K562 (cell line): ENCODE measurements at regions of chr1 and their contacts with region 1.

Region 1: GRCh38 chr1:156728597-156729462 is at the start of gene ISG20L2:
- DNase-seq: peak; percentile 92 to 99 (median 92)
- ATAC-seq: peak; percentile 88
- H3K4me3 ChIP-seq: peak within 1 kb of the TSS; percentile 76
- H3K27ac ChIP-seq: peak within 1 kb of the TSS; percentile 82
- H3K4me1 ChIP-seq: peaks cover 13 to 17% of the 10 kb centered on the region in 2 experiments; a peak in 4 of 5 replicates
- H3K27me3 ChIP-seq: no peaks in the 10 kb centered on the region; a peak in 1 of 5 replicates
- CTCF ChIP-seq: 0 out of 6 replicates have a peak, but pooled peaks of 1 of the 3 experiments have one; percentile 9
- EP300 ChIP-seq: peak; percentile 38; the same call in 1 of the 2 replicates
- POLR2A ChIP-seq: peak; percentile 59
- RAD21 ChIP-seq: no peak
- polyA plus RNA-seq, gene ISG20L2: 21.3 to 50.3 TPM

Region 2: GRCh38 chr1:156625436-156626078 is 103.3 kb before region 1 on chr1:
- CTCF ChIA-PET with region 1: interaction called, 17 read pairs
- POLR2A ChIA-PET with region 1: interaction called, 4 read pairs
- in situ Hi-C with region 1: no loop called
- intact Hi-C with region 1: loop called (anchors 5 kb)
- DNase-seq: peak; percentile 51 to 82 (median 73)
- ATAC-seq: peak; percentile 58
- H3K4me3 ChIP-seq: peak overlapping the region; percentile 52
- H3K27ac ChIP-seq: peak overlapping the region; percentile 69
- H3K4me1 ChIP-seq: peaks cover 0 to 25% of the 10 kb centered on the region in 2 experiments; a peak in 4 of 5 replicates
- H3K27me3 ChIP-seq: no peaks in the 10 kb centered on the region; a peak in 2 of 5 replicates
- CTCF ChIP-seq: peak; percentile 77 to 89 (median 82)
- EP300 ChIP-seq: no peak
- POLR2A ChIP-seq: no peak
- RAD21 ChIP-seq: peak; percentile 59 to 76

Region 3: GRCh38 chr1:156689035-156689952 is 39.5 kb before region 1 on chr1:
- CTCF ChIA-PET with region 1: interaction called, 143 read pairs
- POLR2A ChIA-PET with region 1: interaction called, 60 read pairs
- in situ Hi-C with region 1: no loop called
- intact Hi-C with region 1: loop called (anchors 1 kb)
- DNase-seq: peak; percentile 87 to 90 (median 88)
- ATAC-seq: peak; percentile 81
- H3K4me3 ChIP-seq: peak overlapping the region; percentile 32
- H3K27ac ChIP-seq: peak overlapping the region; percentile 21; the same call in 2 of the 3 replicates
- H3K4me1 ChIP-seq: peaks cover 45 to 54% of the 10 kb centered on the region in 2 experiments
- H3K27me3 ChIP-seq: 0 out of 5 replicates have a peak, but pooled peaks cover 0 to 2% of the 10 kb centered on the region in 2 experiments
- CTCF ChIP-seq: peak; percentile 92 to 97 (median 97)
- EP300 ChIP-seq: 0 out of 2 replicates have a peak, but pooled peaks have one; percentile 12
- POLR2A ChIP-seq: no peak
- RAD21 ChIP-seq: peak; percentile 94 to 98

Region 4: GRCh38 chr1:156717275-156717805 is 11.5 kb before region 1 on chr1:
- CTCF ChIA-PET with region 1: no interaction called
- POLR2A ChIA-PET with region 1: interaction called, 12 read pairs
- in situ Hi-C with region 1: no loop called
- intact Hi-C with region 1: no loop called
- DNase-seq: no peak
- ATAC-seq: no peak
- H3K4me3 ChIP-seq: no peak overlapping the region
- H3K27ac ChIP-seq: no peak overlapping the region
- H3K4me1 ChIP-seq: no peaks in the 10 kb centered on the region; a peak in 1 of 5 replicates
- H3K27me3 ChIP-seq: no peaks in the 10 kb centered on the region
- CTCF ChIP-seq: no peak
- EP300 ChIP-seq: no peak
- POLR2A ChIP-seq: no peak
- RAD21 ChIP-seq: no peak

Region 5: DNA sequence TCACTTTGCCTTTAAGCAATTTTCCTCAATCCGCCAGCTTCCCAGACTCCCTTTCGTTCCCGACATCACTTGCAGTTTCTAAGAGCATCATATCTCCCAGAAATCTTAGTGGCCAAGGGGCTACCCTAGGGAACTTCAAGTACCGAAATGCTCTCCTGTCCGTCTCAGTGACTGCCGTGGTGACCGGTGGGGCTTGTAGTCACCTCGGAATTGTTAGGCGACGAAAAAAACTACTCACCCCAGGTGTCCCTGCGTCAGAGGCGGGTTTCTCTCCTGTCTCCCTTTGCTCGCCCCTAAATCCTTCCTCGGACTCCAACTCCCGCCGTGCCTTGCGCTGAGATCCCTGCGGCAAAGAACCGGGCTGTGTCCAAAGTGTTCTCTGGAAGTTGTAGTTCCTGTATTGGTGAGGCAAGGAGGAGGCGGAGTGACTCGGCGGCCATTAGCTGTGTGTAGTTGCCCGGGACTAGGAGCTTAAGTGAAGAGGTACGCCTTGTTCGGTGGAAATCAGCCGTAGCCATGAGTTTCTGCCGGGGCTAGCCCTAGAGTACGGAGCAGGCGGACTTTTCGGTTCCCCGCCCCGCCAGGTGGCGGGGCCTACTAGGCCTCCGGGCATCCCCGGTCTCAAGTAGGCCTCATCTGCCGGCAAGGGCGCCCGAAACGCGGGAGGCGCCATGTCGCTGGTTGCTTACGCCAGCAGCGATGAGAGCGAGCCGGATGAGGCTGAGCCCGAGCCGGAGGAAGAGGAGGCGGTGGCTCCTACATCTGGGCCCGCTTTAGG is 38.5 kb after region 1 on chr1 and contains the start of gene PRCC:
- CTCF ChIA-PET with region 1: interaction called, 3 read pairs
- POLR2A ChIA-PET with region 1: interaction called, 6 read pairs
- in situ Hi-C with region 1: loop called (anchors 5 kb)
- intact Hi-C with region 1: loop called (anchors 2 kb)
- DNase-seq: peak; percentile 87 to 99 (median 89)
- ATAC-seq: peak; percentile 94
- H3K4me3 ChIP-seq: peak within 1 kb of the TSS; percentile 88
- H3K27ac ChIP-seq: peak within 1 kb of the TSS; percentile 84
- H3K4me1 ChIP-seq: peaks cover 17 to 22% of the 10 kb centered on the region in 2 experiments; a peak in 3 of 5 replicates
- H3K27me3 ChIP-seq: no peaks in the 10 kb centered on the region
- CTCF ChIP-seq: peak in 1 of 3 experiments; percentile 19; a peak in 2 of 6 replicates
- EP300 ChIP-seq: 0 out of 2 replicates have a peak, but pooled peaks have one; percentile 2
- POLR2A ChIP-seq: peak; percentile 79
- RAD21 ChIP-seq: 0 out of 4 replicates have a peak, but pooled peaks of 1 of the 2 experiments have one; percentile 3
- polyA plus RNA-seq, gene PRCC: 23.9 to 25.5 TPM

Region 6: GRCh38 chr1:156845055-156845952 is 116.5 kb after region 1 on chr1:
- CTCF ChIA-PET with region 1: no interaction called
- POLR2A ChIA-PET with region 1: no interaction called
- in situ Hi-C with region 1: no loop called
- intact Hi-C with region 1: no loop called
- DNase-seq: peak; percentile 34 to 89 (median 76)
- ATAC-seq: peak; percentile 59
- H3K4me3 ChIP-seq: no peak overlapping the region
- H3K27ac ChIP-seq: no peak overlapping the region
- H3K4me1 ChIP-seq: peaks cover 9 to 26% of the 10 kb centered on the region in 2 experiments; a peak in 4 of 5 replicates
- H3K27me3 ChIP-seq: 0 out of 5 replicates have a peak, but pooled peaks cover 0 to 13% of the 10 kb centered on the region in 2 experiments
- CTCF ChIP-seq: no peak
- EP300 ChIP-seq: no peak
- POLR2A ChIP-seq: no peak
- RAD21 ChIP-seq: no peak

Region 7: DNA sequence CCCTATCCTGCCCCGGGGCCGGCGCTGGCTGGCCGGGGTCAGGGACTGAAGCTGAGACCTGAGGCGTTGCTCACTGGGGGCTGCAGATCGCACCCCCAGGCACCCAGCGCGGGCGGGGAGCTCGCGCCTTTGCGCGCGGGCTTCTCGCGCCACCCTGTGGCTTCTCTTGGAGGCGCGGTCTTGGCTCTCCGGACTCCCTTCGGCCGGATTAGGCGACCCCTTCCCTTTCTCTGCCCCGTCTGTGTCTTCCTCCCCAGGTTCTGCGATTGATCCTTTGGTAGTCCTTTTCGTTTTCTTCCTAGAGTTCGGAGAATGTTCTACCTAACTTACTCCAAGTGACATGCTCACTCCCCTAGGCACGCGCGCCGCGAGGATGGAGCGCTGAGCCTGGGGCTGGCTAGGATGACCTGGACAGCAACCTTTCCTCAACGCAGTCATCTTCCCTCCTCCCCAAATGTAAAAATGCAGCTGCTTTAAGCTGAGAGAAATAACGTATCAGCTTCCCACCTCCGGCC is 131.3 kb after region 1 on chr1:
- CTCF ChIA-PET with region 1: interaction called, 31 read pairs
- POLR2A ChIA-PET with region 1: interaction called, 12 read pairs
- in situ Hi-C with region 1: loop called (anchors 5 kb)
- intact Hi-C with region 1: loop called (anchors 1 kb)
- DNase-seq: peak; percentile 80 to 86 (median 80)
- ATAC-seq: peak; percentile 78
- H3K4me3 ChIP-seq: peak overlapping the region; percentile 34
- H3K27ac ChIP-seq: no peak overlapping the region; the same call in 2 of the 3 replicates
- H3K4me1 ChIP-seq: peaks cover 75 to 81% of the 10 kb centered on the region in 2 experiments
- H3K27me3 ChIP-seq: no peaks in the 10 kb centered on the region
- CTCF ChIP-seq: peak; percentile 83 to 90 (median 85)
- EP300 ChIP-seq: no peak
- POLR2A ChIP-seq: no peak
- RAD21 ChIP-seq: peak; percentile 89 to 94

Region 8: GRCh38 chr1:156920233-156921052 is 191.6 kb after region 1 on chr1 and contains the start of gene LRRC71:
- CTCF ChIA-PET with region 1: interaction called, 3 read pairs
- POLR2A ChIA-PET with region 1: interaction called, 3 read pairs
- in situ Hi-C with region 1: no loop called
- intact Hi-C with region 1: loop called (anchors 5 kb)
- DNase-seq: peak; percentile 94 to 96 (median 95)
- ATAC-seq: peak; percentile 97
- H3K4me3 ChIP-seq: peak within 1 kb of the TSS; percentile 15; the same call in 1 of the 2 replicates
- H3K27ac ChIP-seq: no peak within 1 kb of the TSS
- H3K4me1 ChIP-seq: peaks cover 17 to 34% of the 10 kb centered on the region in 2 experiments
- H3K27me3 ChIP-seq: peaks cover 8 to 17% of the 10 kb centered on the region in 2 experiments; a peak in 3 of 5 replicates
- CTCF ChIP-seq: peak; percentile 97 to 98 (median 97)
- EP300 ChIP-seq: no peak
- POLR2A ChIP-seq: no peak
- RAD21 ChIP-seq: peak; percentile 99
- polyA plus RNA-seq, gene LRRC71: 0.23 to 0.38 TPM

Region 9: DNA sequence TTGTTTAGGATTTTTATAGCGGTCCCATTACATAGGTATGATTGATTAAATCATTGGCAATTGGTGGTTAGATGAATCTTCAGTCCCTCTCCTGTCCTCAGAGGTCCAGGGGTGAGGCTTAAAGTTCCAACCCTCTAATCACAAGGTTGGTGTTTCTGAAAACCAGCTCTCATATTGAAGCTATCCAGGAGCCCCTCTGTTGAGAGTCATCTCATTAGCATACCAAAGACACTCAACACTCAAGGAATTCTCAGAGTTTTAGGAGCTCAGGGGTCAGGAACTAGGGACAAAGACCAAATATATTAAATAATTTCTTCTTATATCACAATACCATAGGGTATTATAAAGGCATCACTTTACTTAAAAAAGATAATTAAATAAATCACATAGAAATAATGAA is 1024.8 kb after region 1 on chr1:
- CTCF ChIA-PET with region 1: no interaction called
- POLR2A ChIA-PET with region 1: no interaction called
- in situ Hi-C with region 1: no loop called
- intact Hi-C with region 1: no loop called
- DNase-seq: no peak
- ATAC-seq: no peak
- H3K4me3 ChIP-seq: no peak overlapping the region
- H3K27ac ChIP-seq: no peak overlapping the region
- H3K4me1 ChIP-seq: no peaks in the 10 kb centered on the region
- H3K27me3 ChIP-seq: no peaks in the 10 kb centered on the region
- CTCF ChIP-seq: no peak
- EP300 ChIP-seq: no peak
- POLR2A ChIP-seq: no peak
- RAD21 ChIP-seq: no peak